Esophagus muscularis mucosa (tissue), 4 donors: ENCODE measurements at regions of chr17 and their contacts with region 1.

Region 1: GRCh38 chr17:59521204-59522126 is 43.9 kb upstream of the DHX40 start:
- DNase-seq: no peak
- H3K4me3 ChIP-seq: no peak overlapping the region
- H3K27ac ChIP-seq: no peak overlapping the region
- H3K4me1 ChIP-seq: peaks cover 0 to 10% (median 9%) of the 10 kb centered on the region in 4 donors
- H3K27me3 ChIP-seq: no peaks in the 10 kb centered on the region
- CTCF ChIP-seq: peak; percentile 75 to 91 (median 81)
- EP300 ChIP-seq: no peak
- POLR2A ChIP-seq: no peak

Region 2: DNA sequence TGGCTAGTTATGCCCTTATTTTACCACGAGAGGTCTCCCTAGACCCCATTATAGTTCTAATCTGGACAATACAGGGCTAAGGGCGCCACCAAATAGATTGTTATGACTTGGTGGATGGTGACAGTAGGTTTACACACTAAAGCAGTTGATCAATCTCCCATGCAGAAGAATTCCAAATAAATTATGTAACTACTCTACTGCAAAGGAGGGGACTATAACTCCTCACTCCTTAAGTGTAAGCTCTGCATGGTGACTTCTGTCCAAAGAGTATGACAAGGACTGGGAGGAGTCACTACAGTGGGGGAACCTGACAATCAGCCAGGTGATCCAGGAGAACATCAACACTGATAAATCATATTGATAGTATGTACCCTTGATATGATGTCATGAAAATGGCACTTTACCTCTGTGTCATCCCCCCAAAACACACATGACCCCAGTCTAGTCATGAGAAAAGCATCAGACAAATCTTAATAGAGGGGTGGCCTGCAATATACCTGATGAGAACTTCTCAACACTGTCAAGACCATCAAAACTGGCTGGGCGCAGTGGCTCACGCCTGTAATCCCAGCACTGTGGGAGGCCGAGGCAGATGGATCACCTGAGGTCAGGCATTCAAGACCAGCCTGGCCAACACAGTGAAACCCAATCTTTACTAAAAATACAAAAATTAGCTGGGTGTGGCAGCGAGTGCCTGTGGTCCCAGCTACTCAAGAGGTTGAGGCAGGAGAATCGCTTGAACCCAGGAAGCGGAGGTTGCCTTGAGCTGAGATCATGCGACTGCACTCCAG is 210.1 kb before region 1 on chr17:
- intact Hi-C with region 1: loop called (anchors 5 kb)
- DNase-seq: no peak
- H3K4me3 ChIP-seq: no peak overlapping the region
- H3K27ac ChIP-seq: no peak overlapping the region
- H3K4me1 ChIP-seq: peaks cover 0 to 11% (median 8%) of the 10 kb centered on the region in 4 donors
- H3K27me3 ChIP-seq: no peaks in the 10 kb centered on the region
- CTCF ChIP-seq: peak; percentile 87 to 97 (median 89)
- EP300 ChIP-seq: no peak
- POLR2A ChIP-seq: no peak

Region 3: GRCh38 chr17:59565171-59565969 is 43.9 kb after region 1 on chr17 and contains the start of gene DHX40:
- intact Hi-C with region 1: loop called (anchors 5 kb)
- DNase-seq: peak; percentile 98
- H3K4me3 ChIP-seq: peak within 1 kb of the TSS; percentile 77 to 99 (median 94)
- H3K27ac ChIP-seq: peak within 1 kb of the TSS; percentile 84 to 92 (median 90)
- H3K4me1 ChIP-seq: peaks cover 12 to 18% (median 14%) of the 10 kb centered on the region in 4 donors
- H3K27me3 ChIP-seq: no peaks in the 10 kb centered on the region
- CTCF ChIP-seq: no peak
- EP300 ChIP-seq: no peak
- POLR2A ChIP-seq: no peak
- total RNA-seq, gene DHX40: 32.4 to 48.0 (median 44.3) TPM

Region 4: DNA sequence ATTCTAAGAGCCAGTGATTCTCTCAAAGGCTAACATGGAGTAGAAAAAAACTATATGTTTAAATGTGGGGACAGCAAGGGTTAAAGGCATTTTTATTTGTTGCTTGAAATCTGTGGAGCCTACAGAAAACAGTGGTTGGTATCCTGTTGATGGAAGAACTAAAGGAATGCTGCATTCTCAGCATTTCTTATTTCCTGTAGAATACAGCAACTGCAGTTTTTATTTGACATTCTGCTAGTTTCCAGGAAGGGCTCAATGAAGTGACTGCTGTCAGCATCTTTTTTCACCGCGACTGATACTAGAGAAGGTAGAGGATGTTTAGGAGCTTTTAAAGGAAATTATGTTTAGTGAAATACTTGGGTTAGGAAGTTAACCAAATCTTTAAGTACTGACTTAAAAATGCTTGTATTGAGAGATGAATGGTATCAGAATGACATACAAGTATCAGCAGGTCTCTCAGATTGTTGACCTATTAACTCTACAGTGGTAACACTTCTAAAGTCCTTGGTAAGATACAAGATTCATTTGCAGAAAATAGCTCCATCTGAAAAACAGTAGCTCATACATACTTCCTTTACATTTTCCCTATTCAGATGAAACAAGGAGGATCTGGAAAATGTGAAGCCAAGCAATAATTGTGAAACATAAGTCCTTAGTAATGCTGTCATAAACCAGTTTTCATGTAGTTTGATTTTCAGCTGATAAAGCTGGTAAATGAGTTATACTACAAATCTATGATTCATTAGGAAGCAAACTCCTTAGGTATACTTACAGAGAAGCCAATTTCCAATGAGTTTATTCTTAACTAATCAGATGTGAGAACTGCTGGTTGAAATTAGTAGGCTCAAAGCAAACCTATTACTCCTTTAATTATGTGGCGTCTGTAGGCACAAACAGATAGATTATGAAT is 113.4 kb after region 1 on chr17:
- intact Hi-C with region 1: no loop called
- DNase-seq: no peak
- H3K4me3 ChIP-seq: no peak overlapping the region
- H3K27ac ChIP-seq: peak overlapping the region in 1 of 4 donors; percentile 16
- H3K4me1 ChIP-seq: peaks cover 36 to 83% (median 77%) of the 10 kb centered on the region in 4 donors
- H3K27me3 ChIP-seq: no peaks in the 10 kb centered on the region
- CTCF ChIP-seq: no peak
- EP300 ChIP-seq: no peak
- POLR2A ChIP-seq: no peak